Common myeloid progenitor, CD34-positive (primary cell): ENCODE measurements at regions of chr12 and their contacts with region 1.

Region 1: GRCh38 chr12:108649669-108650068 is 16.0 kb upstream of the SELPLG start:
- DNase-seq: no peak
- H3K4me3 ChIP-seq: no peak overlapping the region
- H3K27ac ChIP-seq: no peak overlapping the region
- H3K4me1 ChIP-seq: peaks cover 6 to 35% (median 23%) of the 10 kb centered on the region in 4 experiments
- H3K27me3 ChIP-seq: no peaks in the 10 kb centered on the region

Region 2: DNA sequence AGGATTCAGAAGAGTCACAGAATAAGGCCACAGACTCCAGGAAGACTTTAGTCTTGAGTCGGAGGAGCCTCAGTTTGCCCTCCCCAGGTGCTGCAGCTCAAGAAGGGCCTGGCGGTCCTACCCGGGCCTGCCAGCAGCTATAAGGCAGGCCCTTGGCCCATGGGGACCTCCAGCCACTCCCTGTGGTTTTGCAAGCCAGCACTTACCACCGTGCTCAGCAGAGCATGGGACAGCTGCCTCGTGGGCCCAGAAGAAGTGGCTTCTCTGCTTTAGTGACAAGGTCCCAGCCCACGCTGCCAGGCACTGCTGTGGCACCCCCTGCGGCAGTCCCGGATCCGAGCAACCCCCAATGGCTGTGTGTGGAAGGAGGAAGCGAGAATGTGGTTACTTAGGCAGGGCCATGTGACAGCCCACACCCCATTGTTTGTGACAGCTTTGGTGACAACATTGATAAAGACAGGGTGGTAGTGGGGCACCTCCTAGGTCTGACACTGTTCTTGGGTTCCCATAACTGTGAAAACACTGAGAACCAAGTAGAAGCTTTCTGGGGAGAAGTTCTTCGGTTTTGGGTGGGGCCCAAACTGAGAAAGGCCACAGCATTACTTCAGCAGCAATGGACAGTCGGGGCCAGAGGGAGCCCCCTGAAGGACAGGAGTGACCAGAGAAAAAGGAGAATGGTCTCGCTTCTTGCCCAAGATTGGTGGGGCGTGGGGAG is 16.0 kb before region 1 on chr12 and contains the start of gene SELPLG:
- CTCF ChIA-PET with region 1: interaction called, 46 read pairs
- POLR2A ChIA-PET with region 1: no interaction called
- DNase-seq: peak; percentile 82 to 94 (median 90)
- H3K4me3 ChIP-seq: peak within 1 kb of the TSS in 6 of 7 experiments; percentile 38 to 74 (median 60)
- H3K27ac ChIP-seq: peak within 1 kb of the TSS; percentile 68 to 87
- H3K4me1 ChIP-seq: peaks cover 35 to 98% (median 98%) of the 10 kb centered on the region in 4 experiments
- H3K27me3 ChIP-seq: no peaks in the 10 kb centered on the region